ENCODE measurements at regions of chr10 and their contacts with region 1.

Region 1: GRCh38 chr10:91088300-91089140 is 131.9 kb upstream of the PCGF5 start:
- DNase-seq: peak in 1 of 2 experiments; percentile 5
- H3K4me3 ChIP-seq: no peak overlapping the region
- H3K4me3 Mint-ChIP-seq: no peak overlapping the region
- H3K27ac Mint-ChIP-seq: no peak overlapping the region
- H3K4me1 ChIP-seq: no peaks in the 10 kb centered on the region
- H3K4me1 Mint-ChIP-seq: no peaks in the 10 kb centered on the region
- H3K27me3 ChIP-seq: no peaks in the 10 kb centered on the region
- H3K27me3 Mint-ChIP-seq: peaks cover 15% of the 10 kb centered on the region
- CTCF ChIP-seq: peak in 1 of 2 experiments; percentile 18

Region 2: GRCh38 chr10:91006001-91006751 is 82.3 kb before region 1 on chr10:
- CTCF ChIA-PET with region 1: no interaction called
- POLR2A ChIA-PET with region 1: no interaction called
- intact Hi-C with region 1: loop called (anchors 5 kb)
- DNase-seq: peak in 1 of 2 experiments; percentile 74
- H3K4me3 ChIP-seq: no peak overlapping the region
- H3K4me3 Mint-ChIP-seq: no peak overlapping the region
- H3K27ac Mint-ChIP-seq: no peak overlapping the region
- H3K4me1 ChIP-seq: peaks cover 5% of the 10 kb centered on the region; the same call in 1 of the 2 replicates
- H3K4me1 Mint-ChIP-seq: peaks cover 8% of the 10 kb centered on the region
- H3K27me3 ChIP-seq: no peaks in the 10 kb centered on the region
- H3K27me3 Mint-ChIP-seq: no peaks in the 10 kb centered on the region
- CTCF ChIP-seq: peak; percentile 82 to 93

Region 3: DNA sequence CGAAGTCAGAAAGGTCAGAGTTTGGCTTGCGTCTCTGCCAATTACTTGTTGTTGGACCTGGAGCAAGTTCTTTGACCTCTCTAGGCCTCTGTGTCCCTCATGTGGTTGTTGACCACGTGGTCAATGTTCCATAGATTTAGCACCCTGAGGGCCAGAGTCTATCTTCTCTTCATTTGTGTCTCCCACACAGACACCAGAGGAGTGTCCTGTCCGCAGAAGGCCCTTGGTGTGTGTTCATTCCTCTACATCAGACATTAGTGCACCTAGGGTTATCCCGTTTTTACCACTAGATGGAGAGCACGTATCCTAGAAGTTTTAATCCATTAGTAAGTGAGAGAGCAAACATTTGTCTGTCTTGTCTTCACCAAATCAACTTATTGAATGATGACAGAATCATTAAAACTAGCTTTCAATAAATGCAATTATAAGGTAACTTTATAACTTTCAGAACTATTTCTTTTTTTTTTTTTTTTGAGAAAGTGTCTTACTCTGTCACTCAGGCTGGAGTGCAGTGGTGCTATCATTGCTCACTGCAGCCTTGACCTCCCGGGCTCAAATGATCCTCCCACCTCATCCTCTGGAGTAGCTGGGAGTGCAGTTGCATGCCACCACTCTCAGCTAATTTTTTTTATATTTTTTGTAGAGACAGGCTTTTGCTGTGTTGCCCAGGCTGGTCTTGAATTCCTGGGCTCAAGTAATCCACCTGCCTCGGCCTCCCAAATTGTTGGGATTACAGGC is 45.2 kb before region 1 on chr10:
- CTCF ChIA-PET with region 1: interaction called, 5 read pairs
- POLR2A ChIA-PET with region 1: no interaction called
- intact Hi-C with region 1: loop called (anchors 1 kb)
- DNase-seq: peak in 1 of 2 experiments; percentile 23
- H3K4me3 ChIP-seq: no peak overlapping the region
- H3K4me3 Mint-ChIP-seq: no peak overlapping the region
- H3K27ac Mint-ChIP-seq: no peak overlapping the region
- H3K4me1 ChIP-seq: no peaks in the 10 kb centered on the region
- H3K4me1 Mint-ChIP-seq: peaks cover 5% of the 10 kb centered on the region
- H3K27me3 ChIP-seq: no peaks in the 10 kb centered on the region
- H3K27me3 Mint-ChIP-seq: peaks cover 17% of the 10 kb centered on the region
- CTCF ChIP-seq: peak; percentile 43 to 55